CD4-positive, alpha-beta T cell (primary cell): ENCODE measurements at regions of chr17 and their contacts with region 1.

Region 1: GRCh38 chr17:63911657-63912426 is 784 bp upstream of the CSHL1 start:
- DNase-seq: peak; percentile 43 to 80 (median 56)
- ATAC-seq: peak; percentile 86
- H3K4me3 ChIP-seq: no peak overlapping the region
- H3K4me3 Mint-ChIP-seq: no peak overlapping the region
- H3K27ac ChIP-seq: no peak overlapping the region
- H3K27ac Mint-ChIP-seq: no peak overlapping the region
- H3K4me1 ChIP-seq: peaks cover 9% of the 10 kb centered on the region
- H3K4me1 Mint-ChIP-seq: no peaks in the 10 kb centered on the region
- H3K27me3 ChIP-seq: no peaks in the 10 kb centered on the region
- H3K27me3 Mint-ChIP-seq: no peaks in the 10 kb centered on the region
- CTCF ChIP-seq: peak; percentile 78

Region 2: GRCh38 chr17:64281962-64282727 is 370.3 kb after region 1 on chr17:
- CTCF ChIA-PET with region 1: no interaction called
- POLR2A ChIA-PET with region 1: no interaction called
- intact Hi-C with region 1: loop called in 1 of 2 experiments (anchors 5 kb)
- DNase-seq: peak; percentile 9 to 83 (median 40)
- ATAC-seq: peak; percentile 74
- H3K4me3 ChIP-seq: no peak overlapping the region
- H3K4me3 Mint-ChIP-seq: no peak overlapping the region
- H3K27ac ChIP-seq: no peak overlapping the region
- H3K27ac Mint-ChIP-seq: no peak overlapping the region
- H3K4me1 ChIP-seq: peaks cover 3% of the 10 kb centered on the region
- H3K4me1 Mint-ChIP-seq: no peaks in the 10 kb centered on the region
- H3K27me3 ChIP-seq: no peaks in the 10 kb centered on the region
- H3K27me3 Mint-ChIP-seq: no peaks in the 10 kb centered on the region
- CTCF ChIP-seq: peak; percentile 63